Vagina (tissue), 2 donors: ENCODE measurements at regions of chr20 and their contacts with region 1.

Region 1: GRCh38 chr20:347640-348484 is 951 bp downstream of the NRSN2 start:
- DNase-seq: no peak
- H3K4me3 ChIP-seq: peak overlapping the region; percentile 65 to 74
- H3K27ac ChIP-seq: peak overlapping the region; percentile 92
- H3K4me1 ChIP-seq: peaks cover 15% of the 10 kb centered on the region
- H3K27me3 ChIP-seq: no peaks in the 10 kb centered on the region
- CTCF ChIP-seq: no peak
- POLR2A ChIP-seq: peak in 1 of 2 donors; percentile 49

Region 2: DNA sequence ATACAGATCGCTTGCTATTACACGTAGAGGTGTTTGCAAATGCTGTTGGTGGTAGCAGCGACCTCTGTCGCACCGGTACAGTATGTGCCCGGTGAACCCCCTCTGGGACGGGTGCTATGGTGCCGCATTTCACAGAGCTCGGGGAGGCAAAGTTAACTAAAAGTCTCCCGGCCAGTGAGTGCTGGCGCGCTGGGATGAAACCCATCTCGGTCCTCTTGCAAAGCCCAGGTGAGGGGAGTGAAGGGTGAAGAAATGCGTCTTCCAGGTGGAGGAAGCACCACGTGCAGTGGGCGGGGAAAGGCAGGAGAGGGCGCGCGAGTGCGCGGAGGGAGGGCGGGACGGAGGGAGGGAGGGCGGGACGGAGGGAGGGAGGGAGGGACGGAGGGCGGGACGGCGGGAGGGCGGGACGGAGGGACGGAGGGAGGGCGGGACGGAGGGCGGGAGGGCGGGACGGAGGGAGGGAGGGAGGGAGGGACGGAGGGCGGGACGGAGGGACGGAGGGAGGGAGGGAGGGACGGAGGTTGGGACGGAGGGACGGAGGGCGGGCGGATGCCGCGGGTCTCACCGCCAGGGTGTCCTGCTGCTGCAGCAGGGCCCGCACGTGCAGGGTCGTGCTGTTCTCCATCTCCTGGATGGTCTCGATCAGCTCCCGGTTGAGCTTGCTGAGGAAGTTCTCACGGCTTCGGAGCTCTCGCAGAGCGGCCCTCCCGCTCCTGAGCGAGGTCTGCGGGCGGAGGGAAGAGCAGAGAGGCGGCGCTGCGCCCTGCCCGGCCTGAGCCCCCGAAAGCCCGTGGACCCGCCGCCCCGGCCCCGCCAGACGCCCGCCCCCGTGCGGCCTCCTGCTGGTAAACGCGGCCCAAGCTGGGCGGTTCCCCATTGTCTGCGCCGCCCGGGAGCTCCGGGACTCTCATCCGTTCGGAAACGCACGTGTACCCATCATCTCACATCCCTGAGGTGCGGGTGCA is 69.0 kb before region 1 on chr20:
- intact Hi-C with region 1: no loop called
- DNase-seq: peak in 1 of 2 donors; percentile 62
- H3K4me3 ChIP-seq: peak overlapping the region in 1 of 2 donors; percentile 33
- H3K27ac ChIP-seq: no peak overlapping the region
- H3K4me1 ChIP-seq: no peaks in the 10 kb centered on the region
- H3K27me3 ChIP-seq: no peaks in the 10 kb centered on the region
- CTCF ChIP-seq: no peak
- POLR2A ChIP-seq: no peak

Region 3: GRCh38 chr20:407133-407952 is 59.5 kb after region 1 on chr20:
- intact Hi-C with region 1: loop called (anchors 10 kb)
- DNase-seq: peak in 1 of 2 donors; percentile 92
- H3K4me3 ChIP-seq: peak overlapping the region; percentile 67 to 94
- H3K27ac ChIP-seq: peak overlapping the region; percentile 88
- H3K4me1 ChIP-seq: peaks cover 28% of the 10 kb centered on the region
- H3K27me3 ChIP-seq: no peaks in the 10 kb centered on the region
- CTCF ChIP-seq: peak in 1 of 3 experiments; percentile 21
- POLR2A ChIP-seq: peak in 1 of 2 donors; percentile 37

Region 4: DNA sequence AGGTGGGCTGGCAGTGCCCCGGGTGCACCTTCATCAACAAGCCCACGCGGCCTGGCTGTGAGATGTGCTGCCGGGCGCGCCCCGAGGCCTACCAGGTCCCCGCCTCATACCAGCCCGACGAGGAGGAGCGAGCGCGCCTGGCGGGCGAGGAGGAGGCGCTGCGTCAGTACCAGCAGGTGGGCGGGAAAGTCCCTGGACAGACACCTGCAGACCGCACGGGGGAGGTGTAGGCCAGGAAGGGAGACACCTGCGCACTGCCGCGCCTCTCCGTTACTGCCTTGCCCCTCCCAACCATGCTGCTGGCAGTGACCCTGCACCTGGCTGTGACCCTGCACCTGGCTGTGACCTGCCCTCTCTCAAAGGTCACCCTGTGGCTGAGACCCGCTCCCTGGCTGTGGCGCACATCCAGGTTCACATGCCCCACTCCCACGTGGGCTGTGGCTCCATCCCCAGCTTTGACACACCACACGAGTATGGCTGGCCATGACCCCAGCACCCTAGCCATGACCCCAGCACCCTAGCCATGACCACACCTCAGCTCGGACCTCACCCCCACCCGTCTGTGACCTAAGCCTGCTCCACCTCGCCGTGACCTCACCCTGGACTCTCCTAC is 71.8 kb after region 1 on chr20:
- intact Hi-C with region 1: no loop called
- DNase-seq: no peak
- H3K4me3 ChIP-seq: no peak overlapping the region
- H3K27ac ChIP-seq: no peak overlapping the region
- H3K4me1 ChIP-seq: no peaks in the 10 kb centered on the region
- H3K27me3 ChIP-seq: no peaks in the 10 kb centered on the region
- CTCF ChIP-seq: no peak
- POLR2A ChIP-seq: no peak

Region 5: DNA sequence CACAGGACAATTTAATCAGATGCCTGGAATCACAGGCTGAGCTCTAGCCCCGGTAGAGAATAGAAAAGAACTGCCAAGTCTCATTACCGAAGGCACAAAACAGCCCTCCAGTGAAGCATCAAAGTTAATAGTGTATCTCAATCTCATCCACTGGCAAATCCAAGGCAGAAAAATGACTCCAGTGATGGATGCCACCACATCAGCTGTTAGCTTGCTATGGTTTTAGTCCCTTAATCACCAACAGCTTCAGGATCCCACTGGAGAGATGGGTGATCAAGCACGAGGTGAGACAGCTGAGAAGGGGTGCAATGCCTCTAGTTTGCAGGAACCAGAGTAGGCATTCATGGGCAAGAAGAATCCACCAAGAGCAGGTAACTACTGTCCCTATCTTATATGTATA is 1835.5 kb after region 1 on chr20:
- intact Hi-C with region 1: no loop called
- DNase-seq: peak in 1 of 2 donors; percentile 13
- H3K4me3 ChIP-seq: no peak overlapping the region
- H3K27ac ChIP-seq: no peak overlapping the region
- H3K4me1 ChIP-seq: no peaks in the 10 kb centered on the region
- H3K27me3 ChIP-seq: no peaks in the 10 kb centered on the region
- CTCF ChIP-seq: no peak
- POLR2A ChIP-seq: no peak